Heart right ventricle (tissue), 16 donors: ENCODE measurements at regions of chr6 and their contacts with region 1.

Region 1: DNA sequence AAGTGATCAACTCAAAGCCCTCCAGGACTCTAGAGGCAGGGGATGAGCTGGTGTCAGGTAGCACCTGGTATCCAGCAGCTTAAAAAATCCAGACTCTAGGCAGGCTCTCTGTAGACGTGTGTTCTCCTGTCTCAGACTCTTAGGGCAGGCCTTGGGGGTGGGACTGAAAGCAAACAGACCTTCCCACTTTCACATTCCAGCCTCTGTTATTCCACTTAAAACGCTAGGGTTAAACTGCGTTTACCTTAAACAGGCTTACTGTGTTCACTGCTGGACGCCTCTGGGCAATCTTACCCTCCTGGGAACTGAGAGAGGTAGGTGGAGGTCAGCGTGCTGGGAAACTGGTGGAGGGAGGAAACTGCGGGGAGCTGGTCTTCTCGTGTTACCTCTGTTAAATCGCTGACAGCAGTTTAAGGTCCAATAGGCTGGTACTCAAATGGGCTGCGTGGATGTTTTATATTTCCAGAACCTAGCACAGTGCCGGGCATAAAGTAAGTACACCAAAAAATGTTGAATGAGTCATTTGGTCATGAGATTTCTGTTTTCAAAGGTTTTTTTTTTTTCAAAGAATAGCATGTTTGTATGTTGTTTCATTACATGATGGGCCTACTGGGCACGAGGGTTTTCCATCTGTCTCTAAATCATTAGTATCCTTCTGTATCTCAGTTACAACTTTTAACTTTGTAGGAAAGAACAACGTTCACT is at the start of gene GCNT2:
- DNase-seq: no peak
- ATAC-seq: peak; percentile 41 to 81 (median 74)
- H3K4me3 ChIP-seq: peak within 1 kb of the TSS in 9 of 10 donors; percentile 10 to 46 (median 34)
- H3K27ac ChIP-seq: peak within 1 kb of the TSS; percentile 28 to 86 (median 73)
- H3K4me1 ChIP-seq: peaks cover 0 to 31% (median 9%) of the 10 kb centered on the region in 9 donors
- H3K27me3 ChIP-seq: no peaks in the 10 kb centered on the region
- CTCF ChIP-seq: no peak
- total RNA-seq, gene GCNT2: 22.2 to 67.9 (median 48.6) TPM

Region 2: GRCh38 chr6:10555625-10556309 is 34.5 kb after region 1 on chr6:
- intact Hi-C with region 1: loop called in 1 of 10 experiments (anchors 1 kb)
- DNase-seq: peak; percentile 66 to 72
- ATAC-seq: peak; percentile 72 to 95 (median 88)
- H3K4me3 ChIP-seq: peak overlapping the region in 9 of 10 donors; percentile 2 to 50 (median 42)
- H3K27ac ChIP-seq: peak overlapping the region in 9 of 10 donors; percentile 50 to 81 (median 73)
- H3K4me1 ChIP-seq: peaks cover 4 to 57% (median 24%) of the 10 kb centered on the region in 9 donors
- H3K27me3 ChIP-seq: peaks cover 0 to 11% (median 0%) of the 10 kb centered on the region in 7 donors
- CTCF ChIP-seq: no peak

Region 3: GRCh38 chr6:10595731-10596664 is 74.7 kb after region 1 on chr6:
- intact Hi-C with region 1: loop called in 1 of 10 experiments (anchors 5 kb)
- DNase-seq: no peak
- ATAC-seq: no peak
- H3K4me3 ChIP-seq: no peak overlapping the region
- H3K27ac ChIP-seq: peak overlapping the region in 1 of 10 donors; percentile 63
- H3K4me1 ChIP-seq: peaks cover 0 to 43% (median 13%) of the 10 kb centered on the region in 9 donors
- H3K27me3 ChIP-seq: no peaks in the 10 kb centered on the region
- CTCF ChIP-seq: no peak

Region 4: GRCh38 chr6:10747251-10747972 is 226.2 kb after region 1 on chr6 and contains the start of gene TMEM14B:
- intact Hi-C with region 1: no loop called
- DNase-seq: peak; percentile 100
- ATAC-seq: peak; percentile 99 to 100 (median 99)
- H3K4me3 ChIP-seq: peak within 1 kb of the TSS; percentile 59 to 82 (median 74)
- H3K27ac ChIP-seq: peak within 1 kb of the TSS in 9 of 10 donors; percentile 72 to 91 (median 84)
- H3K4me1 ChIP-seq: peaks cover 8 to 40% (median 25%) of the 10 kb centered on the region in 9 donors
- H3K27me3 ChIP-seq: no peaks in the 10 kb centered on the region
- CTCF ChIP-seq: no peak
- total RNA-seq, gene TMEM14B: 93.5 to 116 (median 108) TPM